ENCODE measurements at regions of chr3 and their contacts with region 1.

Region 1: GRCh38 chr3:16290007-16290826 is 25.2 kb downstream of the OXNAD1 start:
- DNase-seq: no peak
- H3K4me3 Mint-ChIP-seq: peak overlapping the region; percentile 82
- H3K27ac Mint-ChIP-seq: peak overlapping the region; percentile 68
- H3K4me1 Mint-ChIP-seq: peaks cover 80% of the 10 kb centered on the region
- H3K27me3 Mint-ChIP-seq: no peaks in the 10 kb centered on the region

Region 2: DNA sequence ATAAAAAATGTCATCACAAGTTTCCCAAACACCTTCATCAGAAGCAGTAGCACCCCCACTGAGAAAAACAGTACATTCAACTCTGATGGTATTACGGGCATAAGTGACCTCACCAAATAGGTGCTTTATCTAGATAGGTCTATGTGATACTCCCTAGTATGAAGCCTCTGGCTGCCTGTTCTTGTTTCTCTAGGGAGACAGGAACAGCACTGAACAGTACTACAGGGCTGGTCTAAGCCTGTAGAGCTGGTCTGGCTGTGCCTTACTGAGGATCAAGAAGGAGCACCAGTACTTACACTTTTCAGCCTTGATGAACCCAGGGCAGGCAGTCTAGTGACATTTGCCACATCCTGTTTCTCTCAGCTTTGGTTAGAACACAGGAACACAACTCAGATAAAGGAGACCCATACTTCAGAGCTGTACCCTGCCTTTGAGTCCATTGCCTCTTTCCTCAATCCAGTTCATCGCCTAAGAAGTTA is 10.7 kb after region 1 on chr3:
- intact Hi-C with region 1: loop called (anchors 1 kb)
- DNase-seq: peak; percentile 58
- H3K4me3 Mint-ChIP-seq: peak overlapping the region; percentile 82
- H3K27ac Mint-ChIP-seq: peak overlapping the region; percentile 94
- H3K4me1 Mint-ChIP-seq: peaks cover 85% of the 10 kb centered on the region
- H3K27me3 Mint-ChIP-seq: no peaks in the 10 kb centered on the region

Region 3: DNA sequence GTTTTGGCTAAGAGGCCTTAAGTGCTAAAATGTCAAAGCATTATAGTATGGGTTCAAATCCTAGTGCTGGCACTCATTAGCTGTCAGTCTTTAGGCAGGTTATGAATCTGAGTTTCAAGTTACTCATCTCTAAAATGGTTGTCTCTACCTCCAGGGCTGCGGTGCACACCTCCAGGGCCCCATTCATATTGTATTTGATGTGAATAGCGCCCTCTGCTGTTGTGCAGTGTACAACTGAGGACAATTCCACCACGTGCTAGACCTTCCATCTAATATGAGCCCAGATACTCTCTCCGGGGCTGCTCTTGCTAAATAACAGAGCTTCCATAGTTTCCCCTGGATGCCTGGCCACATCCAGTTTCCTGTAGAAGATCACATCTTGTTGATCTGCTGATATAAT is 29.1 kb after region 1 on chr3:
- intact Hi-C with region 1: loop called (anchors 1 kb)
- DNase-seq: peak; percentile 72
- H3K4me3 Mint-ChIP-seq: no peak overlapping the region
- H3K27ac Mint-ChIP-seq: peak overlapping the region; percentile 67
- H3K4me1 Mint-ChIP-seq: peaks cover 49% of the 10 kb centered on the region
- H3K27me3 Mint-ChIP-seq: no peaks in the 10 kb centered on the region

Region 4: DNA sequence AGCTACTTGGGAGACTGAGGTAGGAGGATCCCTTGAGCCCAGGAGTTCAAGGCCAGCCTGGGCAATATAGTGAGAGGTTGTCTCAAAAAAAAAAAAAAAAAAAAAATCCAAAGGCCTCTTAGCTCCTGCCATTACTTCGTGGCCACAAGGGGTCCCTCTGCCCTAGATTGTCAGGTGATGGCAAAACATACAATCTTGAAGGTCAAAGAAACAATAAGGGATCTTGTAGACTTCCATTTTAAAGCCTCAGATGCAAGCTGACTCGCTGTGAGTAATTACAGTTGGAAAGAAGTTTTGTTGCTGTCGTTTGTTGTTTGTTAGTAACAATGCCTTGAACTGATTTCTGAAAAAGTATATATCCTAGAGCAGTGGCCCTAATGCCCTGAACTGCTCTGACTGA is 538.6 kb after region 1 on chr3:
- intact Hi-C with region 1: loop called (anchors 10 kb)
- DNase-seq: peak; percentile 28
- H3K4me3 Mint-ChIP-seq: no peak overlapping the region
- H3K27ac Mint-ChIP-seq: no peak overlapping the region
- H3K4me1 Mint-ChIP-seq: peaks cover 18% of the 10 kb centered on the region
- H3K27me3 Mint-ChIP-seq: peaks cover 30% of the 10 kb centered on the region

Region 5: DNA sequence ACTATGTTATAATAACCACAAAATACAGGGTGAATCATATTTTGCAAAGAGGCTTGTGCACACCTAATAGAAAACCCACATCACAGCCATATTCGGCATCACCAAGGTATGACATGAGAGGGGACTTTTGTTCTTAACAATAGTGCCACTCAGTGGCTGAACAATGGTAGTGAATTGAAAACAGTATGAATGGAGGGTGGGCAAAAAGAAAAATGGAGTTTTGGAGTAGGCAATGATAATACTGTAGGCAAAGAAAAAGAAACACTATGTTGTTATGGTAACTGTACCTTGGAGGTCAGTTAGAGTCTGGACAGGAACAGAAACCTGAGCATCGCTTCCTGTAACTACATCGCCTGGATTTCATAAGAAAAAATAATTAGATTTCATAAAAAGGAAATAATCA is 943.2 kb after region 1 on chr3:
- intact Hi-C with region 1: loop called (anchors 10 kb)
- DNase-seq: peak; percentile 27
- H3K4me3 Mint-ChIP-seq: no peak overlapping the region
- H3K27ac Mint-ChIP-seq: no peak overlapping the region
- H3K4me1 Mint-ChIP-seq: peaks cover 18% of the 10 kb centered on the region
- H3K27me3 Mint-ChIP-seq: no peaks in the 10 kb centered on the region

Measured in activated T-helper 2 cell treated with anti-CD3 and anti-CD28 coated beads, Interferon-gamma antibody, Interleukin-2, Interleukin-4, amounts not matched to agents 10 μg/mL and 5 μg/mL and 100 μg/mL, durations not matched to agents 14 hours and 24 hours and 36 hours (primary cell).